MCF 10A (cell line): ENCODE measurements at regions of chr1 and their contacts with region 1.

Region 1: DNA sequence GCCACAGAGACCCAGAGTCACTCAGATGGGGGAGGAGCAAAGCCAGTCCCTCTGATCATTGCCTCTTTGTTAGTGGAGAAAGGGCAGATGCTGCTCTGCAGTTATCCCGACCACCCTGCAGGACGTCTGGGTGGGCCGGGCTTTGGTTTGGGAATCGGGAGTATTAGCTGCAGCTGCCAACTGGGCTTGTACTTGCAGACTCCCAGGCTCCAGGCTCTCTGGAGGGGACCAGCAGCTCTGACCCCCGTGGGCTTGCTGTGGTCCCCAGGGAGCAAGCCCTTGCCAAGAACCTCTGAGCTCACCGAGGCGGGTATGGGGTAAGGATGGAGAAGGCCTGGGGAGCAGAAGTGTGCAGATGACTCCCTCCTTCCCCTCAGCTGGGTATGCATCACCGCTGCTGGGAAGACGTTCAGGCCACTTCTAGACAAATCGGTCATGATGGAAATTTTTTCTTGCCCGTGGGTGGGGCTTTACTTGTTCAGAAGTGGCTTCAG is 21.6 kb downstream of the MAPKAPK2 start:
- DNase-seq: no peak
- H3K4me3 Mint-ChIP-seq: no peak overlapping the region
- H3K27ac Mint-ChIP-seq: no peak overlapping the region
- H3K4me1 Mint-ChIP-seq: peaks cover 61% of the 10 kb centered on the region
- H3K27me3 Mint-ChIP-seq: no peaks in the 10 kb centered on the region
- CTCF ChIP-seq: no peak

Region 2: DNA sequence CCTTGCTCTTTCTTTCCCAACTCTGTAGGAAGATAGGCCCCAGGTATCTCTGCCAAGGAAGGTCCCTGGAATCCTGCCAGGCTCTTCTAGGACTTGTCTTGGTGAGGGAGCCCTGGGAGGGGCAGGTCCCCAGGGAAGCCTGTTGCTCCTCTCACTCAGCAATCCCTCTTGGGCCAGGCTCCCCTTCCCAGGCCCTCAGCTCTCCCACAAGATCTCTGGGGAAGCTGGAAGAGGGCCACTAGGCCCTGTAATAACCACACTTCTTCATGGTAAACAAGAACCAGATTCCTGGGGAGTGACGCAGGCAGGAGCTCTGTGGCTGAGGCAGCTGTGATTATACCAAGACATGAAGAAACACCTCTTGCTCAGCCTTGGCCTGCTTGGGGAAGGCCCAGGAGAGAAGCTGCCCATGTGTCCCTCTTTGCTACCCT is 31.6 kb before region 1 on chr1:
- CTCF ChIA-PET with region 1: interaction called, 3 read pairs
- POLR2A ChIA-PET with region 1: interaction called, 10 read pairs
- intact Hi-C with region 1: loop called (anchors 1 kb)
- DNase-seq: peak; percentile 100
- H3K4me3 Mint-ChIP-seq: peak overlapping the region; percentile 48
- H3K27ac Mint-ChIP-seq: no peak overlapping the region
- H3K4me1 Mint-ChIP-seq: peaks cover 18% of the 10 kb centered on the region
- H3K27me3 Mint-ChIP-seq: no peaks in the 10 kb centered on the region
- CTCF ChIP-seq: no peak

Region 3: DNA sequence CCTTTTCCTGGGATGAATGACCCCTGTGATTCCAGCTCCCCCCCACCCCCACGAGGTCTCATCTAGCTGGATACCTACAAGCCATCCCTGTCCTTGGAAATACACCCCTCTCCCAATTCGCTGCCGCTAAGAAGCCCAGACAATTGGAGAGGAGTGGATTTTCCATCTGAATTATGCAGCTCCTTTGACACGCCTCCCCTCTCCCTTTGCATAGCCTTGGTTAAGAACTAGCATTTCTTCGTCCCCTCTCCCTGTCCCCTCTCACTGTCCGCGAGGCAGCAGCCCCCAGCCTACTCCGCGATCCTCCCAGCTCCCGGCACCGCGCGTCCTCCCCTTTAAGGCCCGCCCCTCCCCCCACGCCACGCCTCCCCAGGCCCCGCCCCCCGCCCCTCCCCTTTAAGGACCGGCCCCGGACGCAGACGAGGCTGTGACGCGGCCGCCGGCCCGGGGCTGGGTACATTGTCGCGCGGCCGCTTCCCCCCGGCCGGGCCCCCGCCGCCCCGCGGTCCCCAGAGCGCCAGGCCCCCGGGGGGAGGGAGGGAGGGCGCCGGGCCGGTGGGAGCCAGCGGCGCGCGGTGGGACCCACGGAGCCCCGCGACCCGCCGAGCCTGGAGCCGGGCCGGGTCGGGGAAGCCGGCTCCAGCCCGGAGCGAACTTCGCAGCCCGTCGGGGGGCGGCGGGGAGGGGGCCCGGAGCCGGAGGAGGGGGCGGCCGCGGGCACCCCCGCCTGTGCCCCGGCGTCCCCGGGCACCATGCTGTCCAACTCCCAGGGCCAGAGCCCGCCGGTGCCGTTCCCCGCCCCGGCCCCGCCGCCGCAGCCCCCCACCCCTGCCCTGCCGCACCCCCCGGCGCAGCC is 21.6 kb before region 1 on chr1 and contains the start of gene MAPKAPK2:
- CTCF ChIA-PET with region 1: interaction called, 36 read pairs
- POLR2A ChIA-PET with region 1: interaction called, 229 read pairs
- intact Hi-C with region 1: no loop called
- DNase-seq: peak; percentile 83
- H3K4me3 Mint-ChIP-seq: peak within 1 kb of the TSS; percentile 93
- H3K27ac Mint-ChIP-seq: peak within 1 kb of the TSS; percentile 97
- H3K4me1 Mint-ChIP-seq: peaks cover 46% of the 10 kb centered on the region
- H3K27me3 Mint-ChIP-seq: no peaks in the 10 kb centered on the region
- CTCF ChIP-seq: no peak
- total RNA-seq, gene MAPKAPK2: 142 and 178 TPM in 2 replicates

Region 4: DNA sequence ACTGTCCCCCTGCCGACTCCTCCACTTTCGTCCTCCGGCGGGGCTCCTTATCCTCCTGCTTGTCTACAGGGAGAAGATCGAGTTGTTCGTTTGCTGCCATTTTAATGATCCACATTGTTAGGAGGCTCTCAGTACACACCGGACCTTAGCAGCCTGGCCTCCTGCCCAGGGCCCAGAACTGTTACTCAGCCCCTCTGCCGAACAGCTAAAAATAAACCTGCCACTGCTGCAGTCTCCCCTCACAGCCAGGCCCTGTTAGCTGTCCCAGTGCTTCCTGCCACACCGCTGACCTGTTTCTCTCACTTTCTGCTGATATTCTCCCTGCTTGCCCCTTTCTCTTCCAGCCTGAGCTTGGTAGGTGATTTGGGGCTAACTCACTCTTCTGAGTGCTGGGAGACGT is 13.3 kb before region 1 on chr1:
- CTCF ChIA-PET with region 1: interaction called, 36 read pairs
- POLR2A ChIA-PET with region 1: interaction called, 229 read pairs
- intact Hi-C with region 1: no loop called
- DNase-seq: no peak
- H3K4me3 Mint-ChIP-seq: no peak overlapping the region
- H3K27ac Mint-ChIP-seq: no peak overlapping the region
- H3K4me1 Mint-ChIP-seq: peaks cover 56% of the 10 kb centered on the region
- H3K27me3 Mint-ChIP-seq: no peaks in the 10 kb centered on the region
- CTCF ChIP-seq: no peak